ENCODE measurements at regions of chr18 and their contacts with region 1.

Region 1: DNA sequence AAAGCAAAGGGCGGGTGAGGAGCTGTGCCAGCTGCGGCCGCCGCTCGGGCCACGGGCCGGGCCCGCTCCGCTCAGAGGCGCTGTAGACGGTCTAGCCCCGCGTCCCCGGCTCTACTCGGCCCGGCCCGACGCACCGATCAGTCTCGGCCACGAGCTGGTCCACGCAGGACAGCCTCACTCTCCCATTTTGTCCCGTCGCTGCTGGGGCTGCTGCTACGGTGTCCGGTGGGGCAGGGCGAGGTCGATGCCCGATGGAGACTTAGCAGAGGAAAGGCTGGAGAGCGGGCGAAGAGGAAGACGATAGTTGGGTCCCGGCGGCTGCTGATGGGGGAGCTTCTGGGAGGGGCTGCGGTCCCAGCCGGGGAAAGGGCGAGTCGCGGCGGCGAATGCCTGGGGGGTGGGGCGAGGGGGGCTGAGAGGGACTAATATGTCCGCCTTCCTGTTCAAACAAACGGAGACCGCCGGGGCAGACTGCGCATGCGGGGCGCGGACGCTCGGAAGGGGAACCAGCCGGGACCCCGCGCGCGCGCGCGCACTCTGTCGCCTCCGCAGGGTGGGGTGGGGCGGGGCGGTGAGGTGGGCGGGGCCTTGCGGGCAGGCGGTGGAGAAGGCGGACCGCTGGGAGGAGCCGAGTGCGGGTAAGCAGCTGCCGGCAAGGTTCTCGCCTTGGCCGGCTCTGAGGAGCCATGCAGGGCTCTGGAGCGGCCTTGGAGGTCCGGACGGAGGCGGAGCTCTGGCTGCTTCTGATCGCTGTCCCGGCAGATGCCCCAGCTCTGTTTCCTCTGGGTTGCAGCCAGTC is at the start of gene ROCK1:
- DNase-seq: peak; percentile 99 to 100 (median 99)
- H3K4me3 ChIP-seq: peak within 1 kb of the TSS; percentile 59
- H3K27ac ChIP-seq: peak within 1 kb of the TSS; percentile 92 to 94
- H3K4me1 ChIP-seq: peaks cover 5% of the 10 kb centered on the region
- H3K27me3 ChIP-seq: no peaks in the 10 kb centered on the region
- CTCF ChIP-seq: no peak
- EP300 ChIP-seq: no peak
- POLR2A ChIP-seq: peak; percentile 75
- total RNA-seq, gene ROCK1: 35.0 to 47.7 (median 43.5) TPM

Region 2: GRCh38 chr18:20988726-20989125 is 122.8 kb before region 1 on chr18:
- intact Hi-C with region 1: loop called in 1 of 4 experiments (anchors 10 kb)
- DNase-seq: no peak
- H3K4me3 ChIP-seq: no peak overlapping the region
- H3K27ac ChIP-seq: no peak overlapping the region
- H3K4me1 ChIP-seq: no peaks in the 10 kb centered on the region
- H3K27me3 ChIP-seq: no peaks in the 10 kb centered on the region
- CTCF ChIP-seq: no peak
- EP300 ChIP-seq: no peak
- POLR2A ChIP-seq: no peak

Region 3: DNA sequence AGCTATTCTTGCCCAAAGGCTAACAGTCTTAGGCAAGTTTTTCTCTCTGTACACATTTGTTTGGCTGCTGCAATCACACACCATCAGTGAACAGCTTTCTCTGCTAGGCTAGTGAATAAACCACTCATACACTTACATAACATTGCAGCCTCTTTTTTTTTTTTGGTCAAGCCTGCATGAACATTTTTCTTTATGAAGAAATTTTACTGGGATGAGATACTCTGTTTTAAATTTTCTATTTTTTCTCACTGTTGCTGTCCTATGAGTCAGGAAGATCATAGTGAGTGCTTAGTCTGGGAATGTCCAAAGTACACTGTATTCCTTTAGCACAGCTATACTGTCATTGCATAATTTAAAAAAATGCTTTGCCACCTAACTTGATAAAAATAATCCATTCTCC is 58.4 kb before region 1 on chr18:
- intact Hi-C with region 1: loop called in 3 of 4 experiments (anchors 5 to 10 kb)
- DNase-seq: no peak
- H3K4me3 ChIP-seq: no peak overlapping the region
- H3K27ac ChIP-seq: no peak overlapping the region
- H3K4me1 ChIP-seq: peaks cover 8% of the 10 kb centered on the region
- H3K27me3 ChIP-seq: no peaks in the 10 kb centered on the region
- CTCF ChIP-seq: no peak
- EP300 ChIP-seq: no peak
- POLR2A ChIP-seq: no peak

Region 4: DNA sequence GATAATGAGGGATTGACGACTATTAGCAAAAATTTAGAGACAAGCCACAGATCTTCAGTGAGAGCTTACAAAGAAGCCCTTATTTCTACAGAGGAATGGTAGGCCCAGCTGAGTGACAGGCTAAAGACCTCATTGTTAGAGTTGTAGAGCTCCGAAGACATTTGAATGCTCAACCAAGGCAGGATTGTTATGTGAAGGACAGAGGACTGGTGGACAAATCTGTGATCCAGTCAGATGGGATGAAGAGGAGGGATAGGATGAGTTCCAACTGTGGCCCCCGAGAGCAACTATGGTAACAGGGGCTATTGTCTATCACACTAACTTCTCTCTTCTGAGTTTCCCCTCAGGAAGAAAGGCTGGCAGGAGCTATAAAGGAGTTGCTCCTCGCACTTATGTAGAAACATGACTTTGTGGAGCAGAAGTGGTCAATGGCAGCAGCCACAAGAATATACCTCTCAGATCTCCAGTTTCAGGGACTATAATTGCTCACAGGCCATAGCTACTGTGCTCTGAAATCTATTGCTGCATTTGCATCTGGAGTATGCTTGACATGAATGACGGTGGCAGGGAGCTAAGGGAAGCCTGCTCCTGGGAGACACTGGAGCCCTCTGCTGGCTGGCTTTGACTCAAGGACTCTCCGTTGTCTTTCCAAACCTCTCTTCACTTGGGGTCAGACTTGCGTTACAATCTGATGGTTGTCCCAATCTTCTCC is 80.2 kb after region 1 on chr18:
- intact Hi-C with region 1: no loop called
- DNase-seq: peak in 2 of 5 donors; percentile 25
- H3K4me3 ChIP-seq: no peak overlapping the region
- H3K27ac ChIP-seq: no peak overlapping the region
- H3K4me1 ChIP-seq: no peaks in the 10 kb centered on the region
- H3K27me3 ChIP-seq: no peaks in the 10 kb centered on the region
- CTCF ChIP-seq: no peak
- EP300 ChIP-seq: no peak
- POLR2A ChIP-seq: no peak

Measured in ovary (tissue), 10 donors.